Posterior vena cava (tissue), 2 donors: ENCODE measurements at regions of chr1 and their contacts with region 1.

Region 1: DNA sequence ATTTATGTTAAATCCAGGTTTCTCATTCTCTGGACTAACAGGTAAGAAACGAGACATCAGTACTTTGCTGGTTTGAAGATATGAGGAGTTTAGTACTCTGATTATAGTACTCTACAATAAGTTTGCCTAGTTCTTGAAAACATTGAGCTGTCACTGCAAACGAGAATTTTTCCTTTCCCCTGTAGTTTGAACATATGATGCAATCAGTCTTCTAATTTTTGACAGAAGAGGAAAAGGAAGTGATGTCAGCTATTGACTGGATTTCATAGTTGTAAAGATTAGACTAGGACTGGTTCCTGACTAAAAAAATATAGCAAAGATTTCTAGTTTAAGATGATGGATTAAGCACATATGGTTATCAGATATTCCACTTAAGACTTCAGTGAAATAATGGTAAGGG is 461.9 kb downstream of the LRRIQ3 start:
- DNase-seq: no peak

Region 2: DNA sequence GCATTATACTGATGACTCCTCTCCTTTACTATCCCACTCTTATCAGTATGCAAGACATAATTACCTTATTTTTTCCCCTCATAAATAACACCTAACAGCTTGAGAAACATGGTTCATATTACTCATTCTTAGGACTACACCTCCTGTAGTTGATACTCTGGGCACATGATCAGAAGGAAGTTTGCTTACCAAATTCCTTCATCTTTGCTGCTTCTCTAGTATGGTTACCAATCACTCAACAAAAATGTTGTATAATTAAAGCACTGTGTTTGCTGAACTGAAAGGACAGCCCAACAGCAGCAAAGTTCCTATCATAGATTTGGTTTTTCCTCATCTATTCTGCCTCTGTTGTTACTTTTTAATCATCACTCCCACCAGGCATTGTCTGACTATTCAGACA is 124.4 kb before region 1 on chr1:
- intact Hi-C with region 1: no loop called
- DNase-seq: no peak

Region 3: DNA sequence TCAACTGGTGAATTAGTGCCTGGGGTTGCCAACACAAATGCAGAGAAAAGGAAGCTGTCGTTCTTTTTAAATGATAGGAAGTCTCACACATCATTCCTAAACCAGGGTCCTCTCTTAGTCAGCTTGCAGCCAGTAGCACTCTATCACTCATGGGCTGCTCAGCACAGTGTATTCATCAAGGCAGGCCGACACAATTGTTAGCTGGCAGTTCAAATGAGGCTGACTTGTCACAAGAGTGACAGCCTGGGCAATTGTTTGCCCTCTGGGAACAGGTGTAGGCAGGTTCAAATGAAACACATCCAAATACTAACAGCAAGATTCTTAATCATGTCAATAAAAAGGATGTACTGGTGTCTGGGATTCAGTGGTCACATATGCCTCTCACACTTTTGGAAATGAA is 860.6 kb after region 1 on chr1:
- intact Hi-C with region 1: loop called in 1 of 2 experiments (anchors 5 kb)
- DNase-seq: no peak